Panc1 (cell line): ENCODE measurements at regions of chr5 and their contacts with region 1.

Region 1: GRCh38 chr5:134803821-134804220 is 41.9 kb upstream of the C5orf24 start:
- DNase-seq: no peak
- ATAC-seq: no peak
- H3K4me3 ChIP-seq: no peak overlapping the region
- H3K27ac ChIP-seq: no peak overlapping the region
- H3K4me1 ChIP-seq: no peaks in the 10 kb centered on the region
- H3K27me3 ChIP-seq: no peaks in the 10 kb centered on the region
- CTCF ChIP-seq: no peak

Region 2: GRCh38 chr5:134793111-134793510 is 10.7 kb before region 1 on chr5:
- CTCF ChIA-PET with region 1: interaction called, 5 read pairs
- POLR2A ChIA-PET with region 1: interaction called, 10 read pairs
- in situ Hi-C with region 1: no loop called
- intact Hi-C with region 1: no loop called
- DNase-seq: no peak
- ATAC-seq: no peak
- H3K4me3 ChIP-seq: no peak overlapping the region
- H3K27ac ChIP-seq: no peak overlapping the region
- H3K4me1 ChIP-seq: no peaks in the 10 kb centered on the region
- H3K27me3 ChIP-seq: no peaks in the 10 kb centered on the region
- CTCF ChIP-seq: no peak

Region 3: DNA sequence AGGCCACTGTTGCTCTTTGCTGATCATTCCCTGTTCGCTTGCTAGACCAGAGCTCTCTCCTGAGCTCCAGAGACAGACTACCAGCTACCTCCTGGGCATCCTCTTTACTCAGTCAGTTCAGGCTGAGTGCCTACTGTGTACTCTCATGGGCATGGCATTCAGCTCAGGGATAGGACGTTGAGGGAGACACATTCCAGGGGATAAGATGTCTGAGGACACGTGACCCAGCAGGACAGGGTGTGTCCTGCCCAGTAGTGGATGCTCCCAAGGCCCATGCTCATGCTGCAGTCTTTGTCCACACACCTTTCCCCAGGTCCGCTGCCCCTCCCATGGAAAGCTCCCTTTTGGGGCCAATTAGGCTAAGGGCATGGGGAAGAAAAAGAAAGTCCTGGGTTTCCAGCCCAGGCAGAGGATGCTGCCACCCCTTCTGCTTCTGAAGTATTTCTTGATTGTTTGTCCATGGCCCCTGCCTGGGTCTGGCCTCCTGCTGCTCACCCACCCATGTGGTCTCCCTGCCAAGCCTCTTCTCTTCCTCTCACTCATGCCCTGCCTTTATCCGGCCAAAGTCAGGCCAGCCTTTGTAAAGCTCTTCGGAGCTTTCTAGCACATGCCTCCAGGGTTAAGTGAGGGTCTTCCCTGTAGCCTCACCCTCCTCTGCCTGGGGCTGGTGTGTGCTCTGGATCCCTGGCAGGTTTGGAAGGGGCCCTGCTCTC is 290.7 kb after region 1 on chr5:
- CTCF ChIA-PET with region 1: no interaction called
- POLR2A ChIA-PET with region 1: no interaction called
- in situ Hi-C with region 1: no loop called
- intact Hi-C with region 1: no loop called
- DNase-seq: no peak
- ATAC-seq: no peak
- H3K4me3 ChIP-seq: no peak overlapping the region
- H3K27ac ChIP-seq: no peak overlapping the region
- H3K4me1 ChIP-seq: no peaks in the 10 kb centered on the region
- H3K27me3 ChIP-seq: no peaks in the 10 kb centered on the region
- CTCF ChIP-seq: no peak